Vagina (tissue), 2 donors: ENCODE measurements at regions of chr9 and their contacts with region 1.

Region 1: GRCh38 chr9:129776938-129777768 is 24.3 kb upstream of the PTGES start:
- DNase-seq: peak in 1 of 2 donors; percentile 99
- H3K4me3 ChIP-seq: peak overlapping the region; percentile 3 to 34
- H3K27ac ChIP-seq: peak overlapping the region; percentile 81
- H3K4me1 ChIP-seq: peaks cover 17% of the 10 kb centered on the region
- H3K27me3 ChIP-seq: no peaks in the 10 kb centered on the region
- CTCF ChIP-seq: no peak
- POLR2A ChIP-seq: no peak

Region 2: DNA sequence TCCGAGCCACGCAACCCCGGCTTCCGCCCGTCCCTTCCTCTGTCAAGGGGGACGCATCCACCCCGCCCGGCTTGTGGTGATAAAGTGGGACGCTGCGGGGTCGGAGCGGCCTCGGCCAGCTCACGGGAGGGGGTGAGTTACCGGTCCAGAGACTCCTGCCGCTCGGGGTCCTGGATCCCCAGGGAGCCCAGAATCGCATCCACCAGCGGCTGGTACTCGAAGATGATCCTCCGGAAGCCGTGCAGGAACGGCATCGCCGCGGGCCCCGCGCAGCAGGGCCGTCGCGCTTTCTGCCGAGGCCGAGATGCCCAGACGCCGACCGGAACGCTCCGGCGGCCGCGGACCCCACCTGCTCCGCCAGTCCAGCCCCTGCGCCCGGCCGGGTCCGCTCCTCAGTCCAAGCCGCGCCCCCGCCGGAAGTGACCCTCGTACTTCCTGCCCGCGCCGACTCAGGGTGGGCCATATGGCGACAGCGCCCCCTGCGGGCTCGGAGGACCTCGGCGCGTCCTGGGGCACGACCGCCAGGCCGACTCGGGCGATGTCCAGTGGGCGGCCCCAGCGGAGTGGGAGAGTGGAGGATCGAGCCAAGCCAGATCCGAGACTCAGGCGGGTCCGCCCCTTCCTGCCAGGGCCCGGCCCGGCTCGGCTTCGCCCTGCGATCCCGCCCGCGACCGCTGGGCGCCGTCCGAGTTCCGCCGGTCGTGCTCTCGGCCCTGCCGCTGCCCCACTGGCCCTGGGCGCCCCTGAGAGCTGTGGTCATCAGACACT is 135.2 kb before region 1 on chr9 and contains the start of gene ASB6:
- intact Hi-C with region 1: loop called (anchors 5 kb)
- DNase-seq: no peak
- H3K4me3 ChIP-seq: peak within 1 kb of the TSS; percentile 82 to 88
- H3K27ac ChIP-seq: peak within 1 kb of the TSS; percentile 86
- H3K4me1 ChIP-seq: peaks cover 45% of the 10 kb centered on the region
- H3K27me3 ChIP-seq: no peaks in the 10 kb centered on the region
- CTCF ChIP-seq: peak; percentile 98 to 100 (median 99)
- POLR2A ChIP-seq: no peak
- total RNA-seq, gene ASB6: 18.9 TPM